OCI-LY7 (cell line): ENCODE measurements at regions of chr9 and their contacts with region 1.

Region 1: DNA sequence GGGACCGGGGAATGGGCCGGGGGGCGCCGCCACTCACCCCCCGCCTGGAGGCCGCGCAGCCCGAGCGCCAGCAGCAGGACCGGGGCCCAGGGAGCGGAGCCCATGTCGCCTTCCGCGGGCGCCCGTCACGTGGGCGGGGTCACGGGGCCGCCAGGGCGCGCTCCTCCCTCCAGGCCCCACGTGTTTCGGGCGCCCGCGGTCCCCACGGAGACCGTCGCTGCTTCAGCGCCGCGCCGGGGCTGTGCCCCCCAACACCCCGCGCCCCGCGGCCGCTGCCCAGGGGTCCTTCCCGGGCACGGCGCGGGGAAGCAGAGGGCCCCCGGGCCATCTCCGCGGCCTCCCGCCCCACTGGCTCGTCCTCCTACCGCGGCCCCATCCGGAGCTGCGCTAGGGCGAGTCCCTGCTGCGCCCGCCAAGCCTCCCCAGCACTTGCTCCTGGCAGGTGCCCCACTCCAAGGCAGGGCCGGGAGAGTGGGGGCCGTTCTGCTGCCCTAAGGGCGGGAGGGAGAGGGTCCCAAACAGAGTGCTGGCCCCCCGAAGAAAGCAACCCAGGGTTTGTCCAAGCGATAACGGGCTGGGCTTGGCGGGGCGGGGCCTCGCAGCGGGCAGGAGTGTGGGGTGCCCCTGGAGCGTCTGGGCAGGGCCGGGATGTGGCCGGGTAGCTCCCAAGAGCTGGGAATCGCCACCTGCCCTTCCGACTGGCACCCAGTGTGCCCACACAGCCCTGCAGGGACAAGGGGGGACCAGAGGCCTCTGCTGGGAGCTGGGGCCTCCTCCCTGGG is at the start of gene DPP7:
- DNase-seq: peak; percentile 82
- H3K4me3 ChIP-seq: peak within 1 kb of the TSS; percentile 95
- H3K27ac ChIP-seq: peak within 1 kb of the TSS; percentile 42
- H3K4me1 ChIP-seq: peaks cover 34% of the 10 kb centered on the region
- CTCF ChIP-seq: no peak
- total RNA-seq, gene DPP7: 173 and 182 TPM in 2 replicates

Region 2: GRCh38 chr9:137175345-137175961 is 60.7 kb after region 1 on chr9:
- CTCF ChIA-PET with region 1: no interaction called
- POLR2A ChIA-PET with region 1: no interaction called
- intact Hi-C with region 1: loop called (anchors 2 kb)
- DNase-seq: no peak
- H3K4me3 ChIP-seq: no peak overlapping the region
- H3K27ac ChIP-seq: no peak overlapping the region
- H3K4me1 ChIP-seq: no peaks in the 10 kb centered on the region
- CTCF ChIP-seq: peak; percentile 65

Region 3: DNA sequence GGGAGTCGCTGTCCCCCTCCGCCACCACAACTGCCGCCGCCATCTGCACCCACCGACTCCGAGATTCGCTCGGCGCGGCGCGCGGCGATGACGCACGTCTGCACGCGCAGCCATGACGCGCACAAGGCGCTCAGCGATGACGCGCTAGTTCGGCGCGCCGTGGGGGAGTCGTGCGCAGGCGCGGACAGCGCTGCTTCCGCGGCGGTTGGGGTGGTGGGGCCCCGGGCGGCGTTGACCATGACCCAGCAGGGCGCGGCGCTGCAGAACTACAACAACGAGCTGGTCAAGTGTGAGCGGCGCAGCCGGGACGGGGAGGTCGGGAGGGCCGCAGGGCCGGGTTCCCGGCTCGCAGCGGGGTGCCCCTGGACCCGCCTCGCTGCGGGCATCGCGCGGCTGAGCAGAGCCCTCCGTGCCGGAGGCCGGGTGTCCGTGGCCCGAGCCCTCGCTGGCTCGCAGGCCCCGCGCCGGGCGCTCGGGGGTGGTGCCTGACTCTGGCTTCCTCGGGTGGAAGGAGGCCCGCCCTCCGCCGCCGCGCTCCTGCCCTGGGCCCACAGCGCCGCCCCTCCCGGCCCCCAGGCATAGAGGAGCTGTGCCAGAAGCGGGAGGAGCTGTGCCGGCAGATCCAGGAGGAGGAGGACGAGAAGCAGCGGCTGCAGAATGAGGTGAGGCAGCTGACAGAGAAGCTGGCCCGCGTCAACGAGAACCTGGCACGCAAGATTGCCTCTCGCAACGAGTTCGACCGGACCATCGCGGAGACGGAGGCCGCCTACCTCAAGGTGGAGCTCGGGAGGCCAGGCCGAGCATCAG is 73.9 kb after region 1 on chr9 and contains the starts of genes ANAPC2 and SSNA1:
- CTCF ChIA-PET with region 1: no interaction called
- POLR2A ChIA-PET with region 1: interaction called, 3 read pairs
- intact Hi-C with region 1: loop called (anchors 5 kb)
- DNase-seq: peak; percentile 98
- H3K4me3 ChIP-seq: peak within 1 kb of the TSS; percentile 94
- H3K27ac ChIP-seq: peak within 1 kb of the TSS; percentile 92
- H3K4me1 ChIP-seq: peaks cover 27% of the 10 kb centered on the region
- CTCF ChIP-seq: peak; percentile 69
- total RNA-seq, gene ANAPC2: 34.8 and 38.6 TPM in 2 replicates
- total RNA-seq, gene SSNA1: 111 and 130 TPM in 2 replicates

Region 4: GRCh38 chr9:137223078-137223970 is 108.5 kb after region 1 on chr9:
- CTCF ChIA-PET with region 1: no interaction called
- POLR2A ChIA-PET with region 1: interaction called, 5 read pairs
- intact Hi-C with region 1: loop called (anchors 1 kb)
- DNase-seq: peak; percentile 100
- H3K4me3 ChIP-seq: peak overlapping the region; percentile 91
- H3K27ac ChIP-seq: peak overlapping the region; percentile 65
- H3K4me1 ChIP-seq: peaks cover 26% of the 10 kb centered on the region
- CTCF ChIP-seq: no peak